ENCODE measurements at regions of chr2 and their contacts with region 1.

Region 1: DNA sequence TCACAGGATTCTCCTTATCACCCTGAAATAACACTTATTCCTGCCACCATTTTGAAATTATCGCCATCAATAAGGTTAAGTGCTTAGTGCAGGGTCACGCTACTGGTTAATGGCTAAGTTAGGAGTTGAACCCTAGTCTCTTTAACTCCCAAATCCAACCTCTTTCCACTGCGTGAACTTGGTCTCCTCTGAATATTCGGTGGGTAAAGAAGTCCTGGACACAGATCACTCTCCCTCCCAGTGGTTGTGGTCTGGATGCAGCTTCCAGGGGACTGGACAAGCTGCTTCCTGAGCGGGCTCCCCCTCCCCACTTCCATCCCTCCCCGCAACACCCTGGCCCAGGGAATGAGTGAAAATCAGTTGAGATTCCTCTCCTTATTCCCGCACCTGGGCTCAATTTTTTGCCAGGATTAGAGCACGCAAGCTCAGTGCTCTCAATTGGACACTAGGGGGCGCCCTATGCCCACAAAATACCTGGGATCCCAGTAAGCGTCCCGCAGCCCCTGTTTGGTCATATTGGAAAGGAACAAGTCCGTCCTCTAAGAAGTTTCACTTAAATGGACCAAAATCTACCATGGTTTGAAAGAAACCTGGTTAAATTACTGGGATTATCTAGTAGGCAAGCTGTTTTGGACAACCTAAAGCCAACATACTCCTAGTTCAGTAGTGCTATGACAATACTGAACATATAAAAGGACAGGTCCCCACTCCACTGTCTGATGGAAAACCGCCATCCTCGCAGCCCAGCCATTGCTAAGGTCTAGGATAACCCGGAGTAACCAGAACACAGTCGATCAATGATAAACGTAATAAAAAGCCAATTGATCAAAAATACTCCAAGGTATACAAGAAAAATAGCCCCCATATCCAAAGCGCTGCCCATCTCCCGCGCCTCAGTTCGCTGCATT is 40.4 kb downstream of the DHRS9 start:
- DNase-seq: peak; percentile 82
- H3K4me3 Mint-ChIP-seq: no peak overlapping the region
- H3K27ac Mint-ChIP-seq: no peak overlapping the region
- H3K4me1 Mint-ChIP-seq: peaks cover 47% of the 10 kb centered on the region
- H3K27me3 Mint-ChIP-seq: peaks cover 3% of the 10 kb centered on the region

Region 2: DNA sequence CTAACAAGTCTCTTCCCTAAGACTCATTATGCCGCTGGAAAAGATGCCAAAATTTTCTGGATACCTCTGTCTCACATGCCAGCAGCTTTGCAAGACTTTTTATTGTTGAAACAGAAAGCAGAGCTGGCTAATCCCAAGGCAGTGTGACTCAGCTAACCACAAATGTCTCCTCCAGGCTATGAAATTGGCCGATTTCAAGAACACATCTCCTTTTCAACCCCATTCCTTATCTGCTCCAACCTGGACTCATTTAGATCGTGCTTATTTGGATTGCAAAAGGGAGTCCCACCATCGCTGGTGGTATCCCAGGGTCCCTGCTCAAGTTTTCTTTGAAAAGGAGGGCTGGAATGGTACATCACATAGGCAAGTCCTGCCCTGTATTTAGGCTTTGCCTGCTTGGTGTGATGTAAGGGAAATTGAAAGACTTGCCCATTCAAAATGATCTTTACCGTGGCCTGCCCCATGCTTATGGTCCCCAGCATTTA is 14.1 kb before region 1 on chr2:
- CTCF ChIA-PET with region 1: interaction called, 13 read pairs
- POLR2A ChIA-PET with region 1: no interaction called
- DNase-seq: no peak
- H3K4me3 Mint-ChIP-seq: peak overlapping the region; percentile 8
- H3K27ac Mint-ChIP-seq: peak overlapping the region; percentile 38
- H3K4me1 Mint-ChIP-seq: peaks cover 20% of the 10 kb centered on the region
- H3K27me3 Mint-ChIP-seq: no peaks in the 10 kb centered on the region

Region 3: DNA sequence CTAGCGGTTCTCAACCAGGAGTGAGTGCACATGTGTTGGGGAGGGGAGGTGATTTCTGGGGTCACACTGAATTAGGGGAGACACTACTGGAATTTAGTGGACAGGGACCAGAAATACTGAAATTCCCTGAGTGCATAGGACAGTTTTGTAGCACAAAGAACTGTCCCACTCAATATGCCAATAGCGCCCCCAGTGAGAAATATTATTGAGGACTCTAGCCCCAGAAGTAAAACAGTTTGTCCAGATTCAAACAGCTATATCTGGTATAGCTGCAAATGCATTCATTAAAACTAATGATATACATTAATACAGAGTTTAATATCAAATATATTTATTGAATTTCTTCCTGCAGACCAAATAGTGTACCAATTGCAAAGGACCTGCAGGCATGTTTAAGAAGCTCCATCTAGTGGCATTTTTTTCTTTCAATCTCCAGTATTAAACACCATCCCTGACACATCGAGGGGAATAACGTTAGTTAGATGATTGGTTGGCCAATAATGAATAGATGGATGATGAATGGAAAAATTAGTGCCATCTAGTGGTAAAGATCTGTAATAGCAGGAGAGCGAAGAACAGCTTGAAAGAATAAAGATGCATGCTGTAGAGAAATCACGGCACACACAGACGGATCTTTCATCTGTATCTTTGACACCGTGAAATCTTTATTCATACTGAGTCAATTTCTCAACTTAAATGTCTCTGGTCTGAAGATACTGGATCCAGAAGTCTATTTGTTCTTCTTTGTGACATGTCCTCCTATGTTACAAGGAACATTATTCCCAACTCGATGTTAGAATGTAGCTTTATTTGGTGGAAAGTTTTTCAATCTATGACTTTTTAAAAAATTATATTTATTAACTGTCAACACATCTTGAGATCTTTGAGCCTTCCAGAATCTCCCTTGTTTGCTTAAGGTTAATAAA is 22.1 kb after region 1 on chr2:
- CTCF ChIA-PET with region 1: interaction called, 19 read pairs
- POLR2A ChIA-PET with region 1: no interaction called
- DNase-seq: no peak
- H3K4me3 Mint-ChIP-seq: no peak overlapping the region
- H3K27ac Mint-ChIP-seq: no peak overlapping the region
- H3K4me1 Mint-ChIP-seq: peaks cover 2% of the 10 kb centered on the region
- H3K27me3 Mint-ChIP-seq: no peaks in the 10 kb centered on the region

Region 4: GRCh38 chr2:169141713-169142352 is 32.1 kb after region 1 on chr2:
- CTCF ChIA-PET with region 1: interaction called, 18 read pairs
- POLR2A ChIA-PET with region 1: no interaction called
- DNase-seq: peak; percentile 68
- H3K4me3 Mint-ChIP-seq: no peak overlapping the region
- H3K27ac Mint-ChIP-seq: no peak overlapping the region
- H3K4me1 Mint-ChIP-seq: no peaks in the 10 kb centered on the region
- H3K27me3 Mint-ChIP-seq: no peaks in the 10 kb centered on the region